AG04449 (cell line): ENCODE measurements at regions of chr11 and their contacts with region 1.

Region 1: GRCh38 chr11:119728651-119729580 is at the start of gene NECTIN1:
- DNase-seq: no peak
- H3K4me3 ChIP-seq: peak within 1 kb of the TSS; percentile 67
- CTCF ChIP-seq: peak; percentile 95

Region 2: DNA sequence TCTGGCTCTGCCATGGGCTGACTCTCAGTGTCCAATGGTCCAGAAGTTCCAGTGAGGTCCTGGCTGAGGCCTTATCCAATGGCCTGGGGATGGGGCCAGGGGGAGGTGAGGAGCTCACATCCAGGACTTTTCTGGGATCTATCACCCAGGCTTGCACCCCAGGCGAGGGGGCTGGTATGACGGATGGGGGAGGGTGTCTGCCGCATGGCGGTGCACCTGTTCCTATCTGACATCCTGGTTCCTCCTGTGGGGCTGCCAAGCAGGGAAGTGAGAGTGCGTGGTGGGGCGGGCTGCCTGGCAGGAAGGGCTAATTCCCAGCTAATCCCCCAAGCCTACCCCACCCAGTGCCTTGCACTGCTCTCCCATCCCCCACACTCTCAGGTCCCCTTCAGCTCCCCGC is 102.0 kb before region 1 on chr11:
- CTCF ChIA-PET with region 1: no interaction called
- POLR2A ChIA-PET with region 1: no interaction called
- DNase-seq: no peak
- H3K4me3 ChIP-seq: no peak overlapping the region
- CTCF ChIP-seq: no peak

Region 3: GRCh38 chr11:119666463-119667131 is 62.3 kb before region 1 on chr11:
- CTCF ChIA-PET with region 1: interaction called, 38 read pairs
- POLR2A ChIA-PET with region 1: no interaction called
- DNase-seq: no peak
- H3K4me3 ChIP-seq: no peak overlapping the region
- CTCF ChIP-seq: peak; percentile 94

Region 4: DNA sequence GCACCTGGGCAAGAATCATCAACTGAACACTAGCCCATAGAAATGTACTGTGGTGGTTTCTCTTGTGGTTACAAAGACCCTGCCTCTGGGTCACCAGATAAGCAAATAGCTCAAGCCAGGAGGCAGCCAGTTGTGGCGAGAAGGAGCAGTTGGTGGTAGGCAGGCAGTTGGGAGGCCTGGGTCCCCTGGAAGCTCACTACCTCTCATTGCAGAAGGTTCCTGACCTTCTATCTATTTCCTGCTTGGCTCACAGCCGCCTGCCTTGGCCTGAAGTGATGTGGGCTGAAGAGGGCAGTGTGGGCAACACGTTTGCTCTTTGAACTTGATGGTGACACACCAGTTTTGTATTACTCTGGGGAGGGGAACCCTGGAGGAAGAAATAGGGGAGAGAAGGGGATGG is 34.6 kb before region 1 on chr11:
- CTCF ChIA-PET with region 1: interaction called, 15 read pairs
- POLR2A ChIA-PET with region 1: no interaction called
- DNase-seq: no peak
- H3K4me3 ChIP-seq: no peak overlapping the region
- CTCF ChIP-seq: no peak

Region 5: DNA sequence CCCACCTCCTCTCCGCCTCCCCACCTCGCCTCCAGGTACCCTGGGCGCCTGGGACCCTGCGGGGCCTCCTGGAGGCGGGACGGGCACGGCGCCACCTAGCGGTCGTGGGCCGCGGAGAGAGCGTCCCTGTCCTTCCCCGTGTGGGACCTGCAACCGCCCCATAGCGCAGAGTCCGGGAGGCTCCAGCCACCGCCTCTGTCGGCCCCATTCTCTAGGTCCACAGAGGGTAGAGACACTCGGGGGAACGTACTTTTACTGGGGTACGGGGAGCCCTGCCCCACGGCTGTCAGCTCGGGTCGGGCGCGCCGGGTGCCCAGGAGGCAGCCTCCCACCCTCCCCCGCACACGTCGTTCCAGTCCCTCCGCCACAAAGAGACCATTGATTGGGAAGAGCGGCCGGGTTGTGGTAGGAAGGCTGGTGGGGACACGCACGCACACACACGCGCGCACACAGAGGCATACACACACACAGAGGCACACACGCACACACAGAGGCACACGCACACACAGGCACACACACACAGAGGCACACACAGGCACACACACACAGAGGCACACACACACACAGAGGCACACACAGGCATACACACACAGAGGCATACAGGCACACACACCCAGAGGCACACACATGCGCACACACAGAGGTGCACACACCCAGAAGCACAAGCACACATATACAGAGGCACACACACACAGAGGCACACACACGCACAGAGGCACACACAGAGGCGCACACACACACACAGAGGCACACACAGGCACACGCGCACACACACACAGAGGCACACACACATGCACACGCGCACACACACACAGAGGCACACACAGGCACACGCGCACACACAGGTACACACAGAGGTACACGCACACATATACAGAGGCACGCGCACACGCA is 12.7 kb after region 1 on chr11:
- CTCF ChIA-PET with region 1: interaction called, 24 read pairs
- POLR2A ChIA-PET with region 1: no interaction called
- DNase-seq: no peak
- H3K4me3 ChIP-seq: no peak overlapping the region
- CTCF ChIP-seq: peak; percentile 82

Region 6: DNA sequence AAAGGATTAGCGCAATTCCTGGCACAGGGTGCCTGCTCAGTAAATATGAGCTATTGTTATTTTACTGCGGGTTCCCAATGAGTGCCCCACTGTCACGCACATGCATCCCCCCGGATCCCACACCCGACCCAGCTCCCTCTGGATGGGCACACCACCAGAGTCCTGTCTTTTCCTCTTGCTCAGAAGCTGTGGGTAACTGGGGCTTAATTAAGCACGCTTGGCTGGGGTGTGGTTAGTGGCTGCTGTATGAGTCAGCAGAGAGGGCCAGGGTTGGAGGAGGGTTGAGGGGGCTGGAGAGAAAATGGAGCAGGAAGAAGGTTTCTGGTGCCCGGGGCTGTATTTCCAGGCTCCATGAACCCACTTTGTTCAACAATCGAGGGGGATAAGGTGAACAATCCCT is 30.4 kb after region 1 on chr11:
- CTCF ChIA-PET with region 1: interaction called, 56 read pairs
- POLR2A ChIA-PET with region 1: no interaction called
- DNase-seq: no peak
- H3K4me3 ChIP-seq: no peak overlapping the region
- CTCF ChIP-seq: no peak

Region 7: DNA sequence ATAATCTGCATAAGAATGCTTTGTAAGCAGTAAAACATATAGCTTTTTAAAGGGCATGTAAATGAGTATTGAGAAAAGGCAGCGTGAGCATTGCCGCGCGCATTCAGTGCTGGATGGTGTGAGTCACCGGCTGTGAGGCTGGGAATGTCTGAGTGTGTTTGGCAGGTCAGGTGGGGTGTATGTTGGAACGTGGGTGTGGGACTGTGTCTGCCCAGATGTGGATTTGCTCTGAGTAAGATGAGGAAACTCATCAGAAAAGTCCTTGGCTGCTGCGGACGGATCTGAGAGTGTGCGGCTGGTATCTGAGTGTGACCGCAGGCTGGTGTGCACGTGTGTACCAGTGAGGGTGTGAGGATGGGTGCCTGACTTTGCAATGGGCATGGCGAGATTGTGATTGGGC is 66.3 kb after region 1 on chr11:
- CTCF ChIA-PET with region 1: interaction called, 12 read pairs
- POLR2A ChIA-PET with region 1: interaction called, 5 read pairs
- DNase-seq: peak; percentile 19
- H3K4me3 ChIP-seq: no peak overlapping the region
- CTCF ChIP-seq: no peak

Region 8: DNA sequence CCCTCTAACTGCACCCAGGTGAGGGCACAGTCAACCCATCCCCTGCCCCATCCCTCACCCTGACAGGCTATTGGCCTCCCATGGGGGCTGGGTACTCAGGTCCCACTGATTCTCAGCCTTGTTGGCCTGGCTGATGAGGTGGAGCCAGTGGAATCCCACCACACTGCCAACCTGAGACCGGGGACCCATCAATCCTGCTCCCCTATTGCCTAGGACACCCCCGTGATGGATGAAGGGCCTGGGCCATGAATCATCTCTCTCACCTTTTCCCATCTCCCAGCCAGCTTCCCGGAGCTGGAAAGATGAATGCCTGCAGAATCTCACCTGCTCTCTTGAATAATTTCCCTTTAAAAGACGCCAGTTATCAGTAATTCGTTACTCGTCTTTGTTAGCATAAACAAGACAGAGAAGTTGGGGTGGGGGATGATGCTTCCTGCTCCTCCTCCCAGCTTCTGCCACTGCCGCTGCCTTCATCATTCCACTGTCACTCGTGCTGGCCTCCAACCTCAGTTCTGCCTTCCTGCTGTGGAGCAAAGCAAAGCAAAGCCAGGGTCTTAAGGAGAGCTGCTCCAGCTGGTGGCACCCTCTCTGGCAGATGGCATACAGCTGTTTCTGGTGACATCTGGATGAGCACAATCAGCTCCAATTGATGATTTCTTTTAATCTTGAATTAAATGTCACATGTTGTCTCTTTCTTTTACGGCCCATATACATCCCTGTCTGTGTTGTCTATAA is 204.1 kb after region 1 on chr11:
- CTCF ChIA-PET with region 1: no interaction called
- POLR2A ChIA-PET with region 1: no interaction called
- DNase-seq: no peak
- H3K4me3 ChIP-seq: no peak overlapping the region
- CTCF ChIP-seq: no peak

Region 9: GRCh38 chr11:120024046-120024445 is 295.1 kb after region 1 on chr11:
- CTCF ChIA-PET with region 1: no interaction called
- POLR2A ChIA-PET with region 1: no interaction called
- DNase-seq: no peak
- H3K4me3 ChIP-seq: no peak overlapping the region
- CTCF ChIP-seq: no peak